Panc1 (cell line): ENCODE measurements at regions of chr13 and their contacts with region 1.

Region 1: DNA sequence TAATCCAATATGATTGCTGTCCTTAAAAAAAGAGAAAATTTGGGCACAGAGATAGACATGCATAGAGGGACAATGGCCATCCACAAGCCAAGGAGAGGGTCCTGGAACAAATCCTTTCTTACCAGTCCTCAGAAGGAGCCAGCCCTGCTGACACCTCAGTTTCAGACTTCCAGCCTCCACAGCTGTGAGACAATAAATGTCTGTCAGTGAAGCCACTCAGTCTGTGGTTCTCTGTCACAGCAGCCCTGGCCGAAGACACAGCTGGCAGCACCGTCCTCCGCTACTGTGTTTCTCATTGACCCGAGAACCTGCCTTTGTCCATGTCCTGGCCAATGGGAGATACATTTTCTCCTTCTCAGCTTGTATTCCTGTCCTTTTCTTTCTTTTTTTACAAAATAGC is 207.9 kb downstream of the TM9SF2 start:
- DNase-seq: no peak
- ATAC-seq: no peak
- H3K4me3 ChIP-seq: no peak overlapping the region
- H3K27ac ChIP-seq: no peak overlapping the region
- H3K4me1 ChIP-seq: no peaks in the 10 kb centered on the region
- H3K27me3 ChIP-seq: no peaks in the 10 kb centered on the region
- CTCF ChIP-seq: no peak

Region 2: DNA sequence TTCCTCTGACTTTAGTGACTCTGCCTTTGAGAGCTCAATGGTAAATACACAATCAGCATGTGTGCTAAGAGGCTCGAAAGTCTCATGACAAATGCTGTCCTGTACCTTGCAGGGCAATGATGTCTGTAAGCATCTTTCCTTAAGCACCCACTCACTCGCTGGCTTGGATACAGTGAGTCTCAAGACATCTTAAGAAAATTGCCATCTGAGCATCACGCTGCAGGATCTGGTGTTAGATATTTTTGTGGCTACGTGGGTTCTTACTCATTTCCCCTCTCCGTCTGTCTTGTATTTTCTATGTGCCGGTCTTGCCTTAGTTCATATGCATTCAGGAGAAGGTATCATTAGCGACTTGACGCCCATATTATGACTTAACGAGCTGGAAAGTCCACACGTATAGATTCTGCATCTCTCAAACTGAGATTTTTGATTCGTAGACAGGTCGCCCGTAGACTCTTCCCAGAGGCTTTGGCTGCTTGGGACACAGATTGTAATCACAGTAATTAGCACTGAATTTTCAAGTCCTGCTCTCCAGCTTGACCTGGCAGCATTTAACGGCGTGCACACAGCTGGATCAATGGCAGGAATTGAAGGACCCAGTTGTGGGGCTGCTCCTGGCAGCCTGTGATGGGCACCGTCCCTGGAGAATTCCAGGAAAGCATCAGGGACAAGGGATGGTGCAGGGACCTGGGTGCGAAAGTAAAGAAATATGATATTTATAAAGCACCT is 31.3 kb after region 1 on chr13:
- CTCF ChIA-PET with region 1: no interaction called
- POLR2A ChIA-PET with region 1: no interaction called
- in situ Hi-C with region 1: no loop called
- intact Hi-C with region 1: no loop called
- DNase-seq: no peak
- ATAC-seq: no peak
- H3K4me3 ChIP-seq: no peak overlapping the region
- H3K27ac ChIP-seq: no peak overlapping the region
- H3K4me1 ChIP-seq: no peaks in the 10 kb centered on the region
- H3K27me3 ChIP-seq: no peaks in the 10 kb centered on the region; the same call in 1 of the 2 replicates
- CTCF ChIP-seq: no peak

Region 3: DNA sequence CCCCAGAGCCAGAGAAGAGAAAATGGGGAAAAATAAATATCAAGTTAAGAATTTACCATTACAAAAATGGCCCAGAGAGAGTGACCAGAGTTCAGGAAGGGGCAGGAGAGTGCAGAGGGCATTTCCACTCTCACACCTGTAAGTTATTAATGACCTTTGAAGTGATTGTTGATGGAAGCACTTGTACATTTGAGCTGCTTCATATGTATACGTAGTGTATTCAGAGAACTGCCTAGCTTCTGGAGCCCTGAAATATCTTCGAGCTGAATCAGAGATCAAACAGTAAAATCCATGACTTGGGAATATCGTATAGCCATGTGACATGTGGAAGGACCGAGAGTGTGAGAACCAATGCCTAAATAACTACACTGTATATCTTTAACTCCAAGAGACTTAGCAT is 330.6 kb after region 1 on chr13:
- CTCF ChIA-PET with region 1: no interaction called
- POLR2A ChIA-PET with region 1: interaction called, 13 read pairs
- in situ Hi-C with region 1: no loop called
- intact Hi-C with region 1: no loop called
- DNase-seq: no peak
- ATAC-seq: peak; percentile 75
- H3K4me3 ChIP-seq: no peak overlapping the region
- H3K27ac ChIP-seq: peak overlapping the region; percentile 39; the same call in 1 of the 2 replicates
- H3K4me1 ChIP-seq: peaks cover 8% of the 10 kb centered on the region
- H3K27me3 ChIP-seq: no peaks in the 10 kb centered on the region
- CTCF ChIP-seq: no peak